ENCODE measurements at regions of chr7 and their contacts with region 1.

Region 1: GRCh38 chr7:139620676-139621344 is 97.3 kb downstream of the CLEC2L start:
- DNase-seq: peak; percentile 84
- ATAC-seq: peak; percentile 97
- H3K4me3 Mint-ChIP-seq: no peak overlapping the region
- H3K27ac Mint-ChIP-seq: no peak overlapping the region; the same call in 1 of the 2 replicates
- H3K4me1 Mint-ChIP-seq: no peaks in the 10 kb centered on the region
- H3K27me3 Mint-ChIP-seq: no peaks in the 10 kb centered on the region
- CTCF ChIP-seq: peak; percentile 67

Region 2: DNA sequence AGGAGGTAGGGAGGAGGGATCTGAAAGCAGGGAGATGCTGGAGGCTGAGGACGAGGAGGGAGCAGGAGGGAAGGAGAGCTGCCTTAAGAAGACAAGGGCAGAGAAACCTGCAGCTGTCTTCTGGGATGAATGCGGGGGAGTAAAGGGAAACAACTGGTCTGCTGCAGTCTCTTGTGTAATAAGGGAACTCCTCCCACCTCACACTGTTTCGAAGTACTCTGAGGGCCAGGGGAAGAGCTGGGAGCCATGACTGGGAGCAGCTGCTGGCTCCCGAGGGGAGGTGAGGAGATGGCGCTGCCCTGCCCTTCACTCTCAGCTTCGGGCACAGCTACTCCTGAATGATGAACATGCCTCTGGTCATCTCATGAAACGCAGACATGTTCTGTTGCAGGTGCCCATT is 32.2 kb before region 1 on chr7:
- CTCF ChIA-PET with region 1: interaction called, 10 read pairs
- POLR2A ChIA-PET with region 1: no interaction called
- DNase-seq: no peak
- ATAC-seq: peak; percentile 63
- H3K4me3 Mint-ChIP-seq: no peak overlapping the region
- H3K27ac Mint-ChIP-seq: no peak overlapping the region
- H3K4me1 Mint-ChIP-seq: peaks cover 3% of the 10 kb centered on the region; the same call in 1 of the 2 replicates
- H3K27me3 Mint-ChIP-seq: no peaks in the 10 kb centered on the region
- CTCF ChIP-seq: no peak

Region 3: DNA sequence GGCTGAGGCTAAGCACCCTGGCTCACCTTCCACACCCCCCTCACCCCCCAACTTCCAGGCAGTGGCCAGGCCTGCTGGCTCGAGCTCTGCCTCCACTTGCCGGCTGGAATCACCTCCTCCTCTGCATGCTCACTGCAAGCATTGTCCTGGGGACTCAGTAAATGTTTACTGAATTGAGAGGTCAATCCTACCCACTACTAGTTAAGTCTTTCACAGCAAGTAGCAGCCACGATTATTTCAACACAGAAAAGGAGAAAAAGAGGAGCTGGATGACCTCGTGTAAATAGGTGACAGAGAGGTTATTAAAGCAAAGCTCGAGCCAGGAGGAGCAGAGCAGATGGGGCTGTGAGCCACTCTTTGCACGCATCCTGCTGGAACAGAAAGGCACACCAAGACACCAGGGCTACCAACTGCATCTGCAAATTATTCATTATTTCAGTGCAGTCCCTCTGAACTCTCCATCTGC is 124.9 kb after region 1 on chr7:
- CTCF ChIA-PET with region 1: interaction called, 10 read pairs
- POLR2A ChIA-PET with region 1: no interaction called
- DNase-seq: no peak
- ATAC-seq: peak; percentile 69
- H3K4me3 Mint-ChIP-seq: no peak overlapping the region
- H3K27ac Mint-ChIP-seq: no peak overlapping the region
- H3K4me1 Mint-ChIP-seq: peaks cover 21% of the 10 kb centered on the region
- H3K27me3 Mint-ChIP-seq: no peaks in the 10 kb centered on the region
- CTCF ChIP-seq: no peak

Region 4: DNA sequence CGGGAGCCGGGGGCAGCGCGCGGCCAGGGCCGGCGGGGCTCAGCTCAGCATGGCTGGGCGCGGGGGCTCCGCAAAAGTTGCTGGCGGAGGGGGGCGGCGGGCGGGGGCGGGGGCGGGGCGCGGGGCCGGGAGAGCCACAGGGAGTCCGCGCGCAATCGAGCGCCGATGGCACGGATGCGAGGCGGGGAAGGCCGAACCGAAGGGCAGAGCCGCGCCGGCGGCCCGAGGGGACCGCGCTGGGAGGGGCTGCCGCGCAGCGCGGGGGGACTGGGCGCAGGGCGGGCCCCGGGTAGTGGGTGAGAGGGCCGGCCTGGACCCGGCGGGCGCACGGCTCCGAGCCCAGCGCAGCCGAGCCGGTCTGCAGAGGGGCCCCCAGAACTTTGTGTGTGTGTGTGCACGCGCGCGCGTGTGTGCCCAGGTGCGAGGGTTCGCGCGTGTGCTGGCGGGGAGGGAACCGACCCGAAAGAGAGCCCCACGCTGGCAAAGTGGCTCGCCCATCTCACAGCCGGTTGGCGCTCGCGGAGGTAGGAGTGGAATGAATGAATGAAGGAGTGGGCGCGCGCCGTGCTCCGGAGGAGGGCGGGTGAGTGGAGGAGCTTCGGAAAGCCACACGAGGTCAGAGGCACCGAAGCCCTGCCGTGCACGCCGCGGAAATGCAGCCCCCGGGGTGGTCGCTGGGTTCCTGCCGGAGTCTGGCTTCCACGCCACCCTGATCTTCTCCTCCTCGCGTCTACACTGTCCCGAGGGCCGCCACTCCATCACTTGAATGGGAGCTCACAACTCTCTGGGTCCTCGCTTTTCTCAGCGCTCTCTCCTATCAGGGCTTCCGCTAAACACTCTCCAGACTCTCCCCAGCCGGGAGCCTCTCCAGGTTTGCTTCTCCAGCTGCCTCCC is 157.4 kb after region 1 on chr7 and contains the start of gene HIPK2:
- CTCF ChIA-PET with region 1: interaction called, 10 read pairs
- POLR2A ChIA-PET with region 1: no interaction called
- DNase-seq: peak; percentile 74
- ATAC-seq: peak; percentile 78
- H3K4me3 Mint-ChIP-seq: peak within 1 kb of the TSS; percentile 95
- H3K27ac Mint-ChIP-seq: no peak within 1 kb of the TSS
- H3K4me1 Mint-ChIP-seq: peaks cover 20% of the 10 kb centered on the region
- H3K27me3 Mint-ChIP-seq: peaks cover 44% of the 10 kb centered on the region
- CTCF ChIP-seq: no peak
- total RNA-seq, gene HIPK2: 20.8 to 25.3 TPM (median 21.3 TPM) in 3 replicates

Region 5: GRCh38 chr7:140003913-140004382 is 383.1 kb after region 1 on chr7:
- CTCF ChIA-PET with region 1: interaction called, 72 read pairs
- POLR2A ChIA-PET with region 1: no interaction called
- DNase-seq: peak; percentile 49
- ATAC-seq: peak; percentile 46
- H3K4me3 Mint-ChIP-seq: no peak overlapping the region
- H3K27ac Mint-ChIP-seq: peak overlapping the region; percentile 91
- H3K4me1 Mint-ChIP-seq: peaks cover 16% of the 10 kb centered on the region
- H3K27me3 Mint-ChIP-seq: no peaks in the 10 kb centered on the region
- CTCF ChIP-seq: peak; percentile 46; the same call in 1 of the 2 replicates

Region 6: DNA sequence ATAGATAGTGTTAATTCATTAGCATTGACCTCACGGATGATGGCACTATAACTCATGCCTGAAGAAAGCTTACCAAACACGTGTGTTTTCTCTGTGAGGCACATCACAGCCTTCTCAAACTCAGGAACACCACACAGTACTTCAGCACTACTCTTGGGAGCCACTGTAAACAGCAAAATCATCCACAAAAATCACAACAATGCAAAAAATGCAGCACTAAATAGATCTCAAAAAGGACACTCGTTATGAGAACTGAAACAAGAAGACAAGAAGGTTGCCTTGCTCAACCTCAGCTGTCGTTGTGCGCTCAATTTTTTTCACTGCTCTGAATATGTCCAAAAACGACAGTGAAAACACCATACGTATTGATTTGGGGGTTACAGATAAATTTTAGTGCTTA is 454.0 kb after region 1 on chr7:
- CTCF ChIA-PET with region 1: no interaction called
- POLR2A ChIA-PET with region 1: no interaction called
- DNase-seq: no peak
- ATAC-seq: no peak
- H3K4me3 Mint-ChIP-seq: no peak overlapping the region
- H3K27ac Mint-ChIP-seq: no peak overlapping the region
- H3K4me1 Mint-ChIP-seq: peaks cover 11% of the 10 kb centered on the region
- H3K27me3 Mint-ChIP-seq: no peaks in the 10 kb centered on the region
- CTCF ChIP-seq: no peak

Measured in WTC11 (cell line).